ENCODE measurements at regions of chr15 and their contacts with region 1.

Region 1: GRCh38 chr15:33700695-33701304 is 267.5 kb upstream of the CHRM5 start:
- DNase-seq: peak; percentile 72
- H3K4me3 ChIP-seq: no peak overlapping the region
- H3K27ac ChIP-seq: no peak overlapping the region
- H3K4me1 ChIP-seq: peaks cover 0 to 5% (median 0%) of the 10 kb centered on the region in 4 donors
- H3K27me3 ChIP-seq: no peaks in the 10 kb centered on the region
- CTCF ChIP-seq: peak; percentile 27 to 89 (median 74)
- EP300 ChIP-seq: no peak
- POLR2A ChIP-seq: no peak

Region 2: DNA sequence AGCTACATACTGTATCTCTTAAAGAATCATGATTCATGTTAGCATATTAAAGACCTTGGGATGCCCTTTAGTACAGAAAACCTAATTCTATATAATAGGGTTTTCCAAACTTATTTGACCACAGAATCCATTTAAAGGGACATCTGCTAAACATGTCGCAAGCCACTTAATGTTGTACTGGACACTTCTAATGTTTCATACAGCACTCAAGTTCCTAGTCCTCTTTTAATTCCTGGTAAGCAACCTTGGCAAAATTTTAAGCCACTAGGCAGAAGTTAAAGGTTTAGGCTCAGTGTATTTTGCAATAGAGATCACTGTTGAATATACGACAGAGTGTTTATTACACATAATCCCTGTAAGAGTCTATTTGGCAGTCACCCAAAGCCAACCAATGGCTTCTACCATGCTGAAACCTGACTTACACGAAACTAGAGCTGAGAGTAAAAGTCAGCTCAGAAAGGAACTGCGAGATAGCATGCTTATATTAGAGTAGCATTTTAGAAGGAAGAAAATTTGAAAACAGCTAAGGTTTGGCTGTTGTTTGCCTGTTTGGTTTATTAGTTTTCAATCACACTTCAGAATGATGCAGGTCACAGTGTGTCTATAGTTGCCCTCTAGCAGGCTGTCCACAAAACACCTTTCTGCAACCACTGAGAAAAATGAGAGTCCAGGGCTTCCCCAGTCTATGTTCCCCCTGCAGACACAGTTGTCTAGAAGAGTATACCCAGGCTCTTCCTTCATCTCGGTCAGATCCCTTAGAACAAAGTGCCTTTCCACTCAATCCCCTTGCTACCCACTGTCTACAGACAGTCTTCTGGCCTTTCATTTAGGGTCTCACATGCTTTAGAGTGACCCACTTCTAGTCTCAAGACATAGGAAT is 610.7 kb before region 1 on chr15:
- intact Hi-C with region 1: loop called (anchors 2 kb)
- DNase-seq: no peak
- H3K4me3 ChIP-seq: no peak overlapping the region
- H3K27ac ChIP-seq: no peak overlapping the region
- H3K4me1 ChIP-seq: peaks cover 0 to 7% (median 0%) of the 10 kb centered on the region in 4 donors
- H3K27me3 ChIP-seq: no peaks in the 10 kb centered on the region
- CTCF ChIP-seq: no peak
- EP300 ChIP-seq: no peak
- POLR2A ChIP-seq: no peak

Region 3: GRCh38 chr15:33292717-33293307 is 408.0 kb before region 1 on chr15:
- intact Hi-C with region 1: loop called (anchors 5 kb)
- DNase-seq: peak; percentile 66
- H3K4me3 ChIP-seq: no peak overlapping the region
- H3K27ac ChIP-seq: no peak overlapping the region
- H3K4me1 ChIP-seq: no peaks in the 10 kb centered on the region
- H3K27me3 ChIP-seq: no peaks in the 10 kb centered on the region
- CTCF ChIP-seq: peak; percentile 54 to 65 (median 60)
- EP300 ChIP-seq: no peak
- POLR2A ChIP-seq: no peak

Region 4: GRCh38 chr15:33309602-33310276 is 391.1 kb before region 1 on chr15:
- intact Hi-C with region 1: loop called (anchors 2 kb)
- DNase-seq: peak; percentile 65
- H3K4me3 ChIP-seq: peak overlapping the region in 3 of 4 donors; percentile 61 to 67 (median 63)
- H3K27ac ChIP-seq: peak overlapping the region in 3 of 4 donors; percentile 82 to 84 (median 83)
- H3K4me1 ChIP-seq: peaks cover 0 to 14% (median 8%) of the 10 kb centered on the region in 4 donors
- H3K27me3 ChIP-seq: peaks cover 0 to 4% (median 0%) of the 10 kb centered on the region in 3 donors
- CTCF ChIP-seq: peak in 2 of 4 experiments; percentile 16 to 32
- EP300 ChIP-seq: no peak
- POLR2A ChIP-seq: no peak

Region 5: DNA sequence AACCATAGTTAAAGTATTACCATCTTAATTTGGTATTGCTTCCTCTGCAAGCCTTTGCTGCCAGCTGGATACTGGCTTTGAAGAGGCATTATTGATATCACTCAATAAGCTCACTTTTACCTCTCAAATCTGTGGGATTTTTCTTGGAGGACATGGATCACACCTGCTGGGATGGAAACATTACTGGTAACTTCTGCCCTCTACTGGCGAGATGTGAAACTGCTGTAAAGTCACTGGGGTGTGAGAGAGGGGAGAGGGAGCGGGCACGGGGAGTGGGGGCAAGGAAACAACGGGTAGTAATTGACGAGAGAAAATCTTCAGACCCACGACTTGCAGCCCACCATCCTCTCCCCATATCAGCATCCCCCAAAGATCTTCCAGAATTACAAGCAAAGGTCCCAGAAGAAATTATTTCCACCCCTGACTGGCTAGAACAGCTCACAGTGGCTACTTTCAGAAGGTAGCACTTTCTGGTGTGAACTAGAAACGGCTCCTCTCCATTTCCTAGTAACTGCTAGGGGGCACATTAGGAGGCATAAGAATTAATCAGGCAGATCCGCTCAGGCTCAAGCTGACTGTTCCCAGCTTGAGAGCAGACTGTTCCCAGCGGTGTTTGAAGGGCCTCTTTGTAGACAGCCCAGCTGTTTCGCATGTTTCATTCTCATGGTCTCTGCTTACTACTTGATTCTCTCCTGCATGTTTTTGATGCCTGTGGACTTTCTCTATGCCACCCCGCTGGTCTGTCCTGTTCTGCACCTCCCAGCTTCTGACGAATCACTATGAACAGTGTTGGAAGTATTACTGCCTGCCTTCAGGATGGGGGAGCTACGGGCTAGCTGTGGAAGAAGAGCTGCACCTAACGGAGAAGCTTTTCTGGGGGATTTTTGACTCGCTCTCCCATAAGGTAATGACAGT is 37.1 kb after region 1 on chr15:
- intact Hi-C with region 1: no loop called
- DNase-seq: no peak
- H3K4me3 ChIP-seq: no peak overlapping the region
- H3K27ac ChIP-seq: no peak overlapping the region
- H3K4me1 ChIP-seq: peaks cover 0 to 11% (median 5%) of the 10 kb centered on the region in 4 donors
- H3K27me3 ChIP-seq: no peaks in the 10 kb centered on the region
- CTCF ChIP-seq: peak in 3 of 4 experiments; percentile 24 to 66 (median 53)
- EP300 ChIP-seq: no peak
- POLR2A ChIP-seq: no peak